CD4-positive, alpha-beta T cell (primary cell): ENCODE measurements at regions of chr9 and their contacts with region 1.

Region 1: DNA sequence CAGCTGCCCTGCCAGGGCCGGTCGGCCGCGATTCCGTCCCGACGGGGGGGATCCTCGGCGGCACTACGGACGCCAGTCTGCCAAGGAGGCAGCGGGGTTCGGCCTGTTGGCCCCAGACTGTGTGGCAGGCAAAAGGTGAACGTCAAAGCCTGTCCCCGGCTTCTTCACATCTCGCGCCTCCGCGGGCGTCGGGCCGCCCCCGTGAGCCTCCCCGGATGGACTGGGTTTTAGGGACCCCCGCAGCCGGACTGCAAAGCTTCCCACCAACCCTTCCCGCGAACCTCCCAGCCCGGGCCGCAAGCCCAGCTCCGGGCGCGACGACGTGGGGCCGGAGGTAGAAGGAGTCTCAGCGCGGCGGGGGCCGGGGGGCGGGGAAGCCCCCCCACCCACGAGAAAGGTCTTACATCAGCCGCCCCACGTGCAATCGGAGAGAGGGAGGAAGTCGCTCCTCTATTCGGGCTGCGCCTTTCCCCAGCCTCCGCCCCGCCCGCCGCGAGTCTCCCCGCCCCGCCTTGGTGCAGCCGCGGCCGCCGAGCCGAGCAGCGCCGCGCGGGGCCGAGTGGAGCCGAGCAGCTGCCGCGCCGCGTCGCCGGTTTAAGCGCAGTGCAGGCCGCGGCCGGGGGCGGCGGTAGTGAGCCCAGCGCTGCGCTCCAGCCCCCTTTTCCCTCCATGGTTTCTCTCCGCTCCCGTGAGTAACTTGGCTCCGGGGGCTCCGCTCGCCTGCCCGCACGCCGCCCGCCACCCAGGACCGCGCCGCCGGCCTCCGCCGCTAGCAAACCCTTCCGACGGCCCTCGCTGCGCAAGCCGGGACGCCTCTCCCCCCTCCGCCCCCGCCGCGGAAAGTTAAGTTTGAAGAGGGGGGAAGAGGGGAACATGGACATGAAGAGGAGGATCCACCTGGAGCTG is at the start of gene ANP32B:
- DNase-seq: peak; percentile 87 to 98 (median 94)
- ATAC-seq: peak; percentile 82
- H3K4me3 ChIP-seq: peak within 1 kb of the TSS; percentile 78
- H3K4me3 Mint-ChIP-seq: peak within 1 kb of the TSS; percentile 93
- H3K27ac ChIP-seq: peak within 1 kb of the TSS; percentile 78 to 88
- H3K27ac Mint-ChIP-seq: peak within 1 kb of the TSS; percentile 89
- H3K4me1 ChIP-seq: peaks cover 50% of the 10 kb centered on the region
- H3K4me1 Mint-ChIP-seq: peaks cover 73% of the 10 kb centered on the region
- H3K27me3 ChIP-seq: no peaks in the 10 kb centered on the region
- H3K27me3 Mint-ChIP-seq: no peaks in the 10 kb centered on the region
- CTCF ChIP-seq: peak; percentile 67
- total RNA-seq, gene ANP32B: 178 to 192 TPM

Region 2: DNA sequence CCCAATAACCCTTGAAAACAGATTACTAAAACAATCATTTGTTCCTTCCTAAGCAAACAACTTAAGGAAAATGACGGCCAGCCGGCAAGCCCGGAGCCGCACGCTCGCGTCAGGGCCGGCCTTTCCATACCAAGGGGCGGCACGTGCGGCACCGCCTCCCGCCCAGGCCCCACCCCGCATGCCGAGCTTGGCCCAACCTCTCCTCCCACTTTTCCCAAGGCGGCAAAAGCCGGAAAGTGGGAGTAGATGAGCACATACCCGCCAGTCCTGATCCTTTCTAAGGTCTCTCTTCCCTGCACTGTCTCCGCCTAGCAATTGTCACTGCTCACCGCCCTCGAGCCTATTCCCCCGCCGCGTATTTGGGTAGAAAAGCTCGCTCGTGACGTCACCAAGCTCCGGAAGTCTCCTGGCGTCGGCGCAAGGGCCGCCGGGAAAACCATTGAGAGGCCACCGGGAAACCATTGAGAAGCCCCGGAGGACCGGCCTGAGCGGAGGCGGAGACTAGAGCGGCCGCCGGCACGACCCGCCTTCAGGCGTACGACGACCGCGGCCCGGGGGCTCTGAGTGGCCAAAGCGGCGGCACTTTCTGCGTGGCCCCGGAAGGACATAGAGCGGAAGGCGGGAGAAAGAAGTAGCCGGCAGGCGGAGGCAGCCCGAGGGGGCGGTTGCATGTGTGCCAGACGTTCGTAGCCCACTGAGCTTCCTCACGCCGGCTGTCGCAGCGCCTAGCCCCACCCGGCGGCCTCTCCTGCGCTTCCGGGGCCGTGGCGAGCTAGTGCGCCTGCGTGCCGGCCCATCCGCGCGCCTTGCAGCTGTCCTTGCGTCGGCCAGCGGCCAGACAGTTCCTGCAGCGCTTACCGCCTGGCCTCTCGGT is 349.7 kb before region 1 on chr9 and contains the starts of genes NCBP1 and TSTD2:
- CTCF ChIA-PET with region 1: interaction called, 3 read pairs
- POLR2A ChIA-PET with region 1: interaction called, 14 read pairs
- intact Hi-C with region 1: loop called in 1 of 2 experiments (anchors 2 kb)
- DNase-seq: peak; percentile 92 to 99 (median 94)
- ATAC-seq: peak; percentile 82
- H3K4me3 ChIP-seq: peak within 1 kb of the TSS; percentile 72
- H3K4me3 Mint-ChIP-seq: peak within 1 kb of the TSS; percentile 97
- H3K27ac ChIP-seq: peak within 1 kb of the TSS; percentile 95 to 97
- H3K27ac Mint-ChIP-seq: peak within 1 kb of the TSS; percentile 99
- H3K4me1 ChIP-seq: peaks cover 37% of the 10 kb centered on the region
- H3K4me1 Mint-ChIP-seq: peaks cover 73% of the 10 kb centered on the region
- H3K27me3 ChIP-seq: no peaks in the 10 kb centered on the region
- H3K27me3 Mint-ChIP-seq: no peaks in the 10 kb centered on the region
- CTCF ChIP-seq: no peak
- total RNA-seq, gene NCBP1: 50.7 to 53.5 TPM
- total RNA-seq, gene TSTD2: 23.8 to 26.0 TPM

Region 3: DNA sequence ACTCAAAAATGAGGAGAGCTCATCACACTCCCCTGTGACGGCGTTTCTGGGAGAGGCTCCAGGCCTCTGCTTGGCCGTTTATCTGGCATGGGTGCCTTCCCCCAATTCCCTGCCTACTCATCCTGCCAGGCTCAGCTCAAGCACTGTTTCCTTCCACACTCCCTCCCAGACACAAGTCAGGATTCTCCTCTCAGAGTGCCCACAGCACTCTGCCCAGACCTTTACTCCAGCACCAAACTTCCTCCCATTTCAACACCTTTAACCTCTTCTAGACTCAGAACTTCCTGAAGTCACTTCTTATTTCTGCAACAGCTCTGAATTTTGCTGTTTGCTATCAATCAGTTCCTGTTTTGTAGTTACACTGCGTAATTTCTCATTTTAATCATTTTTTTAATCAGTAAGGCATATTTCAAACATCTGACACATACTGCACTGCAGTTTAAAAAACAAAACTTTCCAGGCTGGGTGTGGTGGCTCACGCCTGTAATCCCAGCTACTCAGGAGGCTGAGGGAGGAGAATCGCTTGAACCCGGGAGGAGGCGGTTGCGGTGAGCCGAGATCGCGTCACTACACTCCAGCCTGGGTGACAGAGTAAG is 76.6 kb before region 1 on chr9:
- CTCF ChIA-PET with region 1: interaction called, 13 read pairs
- POLR2A ChIA-PET with region 1: interaction called, 9 read pairs
- intact Hi-C with region 1: loop called in 1 of 2 experiments (anchors 5 kb)
- DNase-seq: peak in 11 of 14 experiments; percentile 17 to 81 (median 58)
- ATAC-seq: peak; percentile 51
- H3K4me3 ChIP-seq: peak overlapping the region; percentile 44
- H3K4me3 Mint-ChIP-seq: peak overlapping the region; percentile 82
- H3K27ac ChIP-seq: peak overlapping the region; percentile 81 to 86
- H3K27ac Mint-ChIP-seq: peak overlapping the region; percentile 96
- H3K4me1 ChIP-seq: peaks cover 92% of the 10 kb centered on the region
- H3K4me1 Mint-ChIP-seq: peaks cover 94% of the 10 kb centered on the region
- H3K27me3 ChIP-seq: no peaks in the 10 kb centered on the region
- H3K27me3 Mint-ChIP-seq: no peaks in the 10 kb centered on the region
- CTCF ChIP-seq: no peak

Region 4: GRCh38 chr9:97938081-97938644 is 44.8 kb before region 1 on chr9 and contains the start of gene HEMGN:
- CTCF ChIA-PET with region 1: no interaction called
- POLR2A ChIA-PET with region 1: interaction called, 11 read pairs
- intact Hi-C with region 1: no loop called
- DNase-seq: peak in 9 of 14 experiments; percentile 16 to 87 (median 38)
- ATAC-seq: peak; percentile 98
- H3K4me3 ChIP-seq: no peak within 1 kb of the TSS
- H3K4me3 Mint-ChIP-seq: peak within 1 kb of the TSS; percentile 44
- H3K27ac ChIP-seq: peak within 1 kb of the TSS; percentile 18 to 57
- H3K27ac Mint-ChIP-seq: peak within 1 kb of the TSS; percentile 79
- H3K4me1 ChIP-seq: peaks cover 27% of the 10 kb centered on the region
- H3K4me1 Mint-ChIP-seq: peaks cover 57% of the 10 kb centered on the region
- H3K27me3 ChIP-seq: no peaks in the 10 kb centered on the region
- H3K27me3 Mint-ChIP-seq: no peaks in the 10 kb centered on the region
- CTCF ChIP-seq: no peak
- total RNA-seq, gene HEMGN: 0.30 to 0.34 TPM

Region 5: DNA sequence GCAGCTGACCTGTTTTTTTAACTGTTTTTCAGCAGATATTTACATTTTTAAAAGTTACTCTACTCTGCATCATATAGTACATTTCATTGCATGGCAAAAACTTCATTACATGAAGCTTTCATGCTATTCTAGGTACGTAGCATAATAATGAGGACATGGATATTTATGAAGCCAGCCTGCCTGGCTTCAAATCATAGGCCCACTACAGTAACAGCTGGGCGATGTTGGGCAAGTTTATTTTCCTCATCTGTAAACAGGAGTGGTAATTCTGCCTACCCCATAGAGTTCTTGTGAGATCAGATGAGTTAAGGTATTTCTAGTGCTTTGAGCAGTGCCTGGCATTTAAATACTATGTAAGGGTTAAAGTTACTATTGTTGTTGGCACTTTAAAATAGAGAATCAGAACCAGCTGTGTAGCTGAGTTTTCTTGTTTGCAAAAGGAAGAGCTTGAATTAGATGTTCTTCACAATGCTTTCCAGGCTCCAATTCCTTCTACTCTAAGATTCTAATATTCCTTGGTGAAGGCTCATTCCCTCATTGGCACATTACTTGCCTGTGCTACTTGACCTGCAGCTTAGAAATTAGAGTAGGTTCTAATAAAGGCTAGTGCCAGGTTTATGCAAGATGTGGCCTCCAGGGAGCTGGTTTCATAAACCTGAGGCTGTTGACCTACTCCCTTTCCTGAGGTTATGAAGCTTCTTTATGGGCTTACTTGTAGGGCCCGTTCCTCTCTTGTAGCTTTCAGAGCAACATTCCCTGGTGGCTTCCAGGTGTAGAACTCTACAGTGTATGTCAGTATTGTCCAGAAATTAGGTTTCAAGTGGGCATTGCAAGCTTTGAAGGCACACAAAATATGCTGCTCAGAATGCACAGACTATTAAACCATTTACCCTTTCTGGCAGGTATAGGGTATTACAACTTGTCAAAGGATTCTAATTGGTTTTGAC is 14.7 kb after region 1 on chr9:
- CTCF ChIA-PET with region 1: interaction called, 15 read pairs
- POLR2A ChIA-PET with region 1: interaction called, 12 read pairs
- intact Hi-C with region 1: no loop called
- DNase-seq: no peak
- ATAC-seq: no peak
- H3K4me3 ChIP-seq: no peak overlapping the region
- H3K4me3 Mint-ChIP-seq: no peak overlapping the region
- H3K27ac ChIP-seq: no peak overlapping the region
- H3K27ac Mint-ChIP-seq: peak overlapping the region; percentile 70
- H3K4me1 ChIP-seq: peaks cover 17% of the 10 kb centered on the region
- H3K4me1 Mint-ChIP-seq: peaks cover 70% of the 10 kb centered on the region
- H3K27me3 ChIP-seq: no peaks in the 10 kb centered on the region
- H3K27me3 Mint-ChIP-seq: no peaks in the 10 kb centered on the region
- CTCF ChIP-seq: no peak

Region 6: DNA sequence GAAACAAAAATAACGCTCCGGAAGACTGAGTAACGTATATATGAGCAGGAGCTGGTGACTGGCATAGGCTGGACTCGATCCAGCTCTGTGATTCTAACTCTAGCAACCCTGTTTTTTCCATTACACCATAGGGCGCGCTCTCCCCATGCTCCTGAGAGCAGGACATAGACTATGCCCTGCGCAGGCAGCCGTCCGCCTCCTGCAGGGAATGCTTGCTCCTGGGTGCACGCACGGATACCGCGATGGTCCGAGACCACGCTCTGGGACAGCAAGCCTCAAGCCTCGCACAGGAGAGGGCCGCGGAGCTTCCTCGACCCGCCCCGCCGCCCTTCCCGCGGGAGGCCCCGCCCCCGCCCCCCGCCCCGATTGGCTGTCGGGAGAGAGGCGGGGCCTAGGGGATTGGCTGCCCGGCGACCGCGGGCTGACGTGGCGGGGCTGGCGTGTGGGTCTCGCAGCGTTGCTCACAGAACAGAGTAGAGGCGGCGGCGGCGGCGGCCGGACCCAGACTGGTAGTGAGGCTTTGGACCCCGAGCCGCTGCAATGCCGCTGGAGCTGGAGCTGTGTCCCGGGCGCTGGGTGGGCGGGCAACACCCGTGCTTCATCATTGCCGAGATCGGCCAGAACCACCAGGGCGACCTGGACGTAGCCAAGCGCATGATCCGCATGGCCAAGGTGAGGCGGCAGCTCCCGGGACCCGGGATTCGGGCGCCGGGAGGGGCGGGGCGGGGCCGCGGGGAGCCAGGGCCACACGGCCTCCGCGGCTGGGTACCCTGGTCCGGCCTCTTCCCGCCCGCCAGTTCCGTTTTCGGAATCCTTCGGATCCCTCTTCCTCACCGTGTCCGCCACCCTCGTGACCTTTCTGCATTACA is 73.6 kb after region 1 on chr9 and contains the start of gene NANS:
- CTCF ChIA-PET with region 1: interaction called, 5 read pairs
- POLR2A ChIA-PET with region 1: interaction called, 28 read pairs
- intact Hi-C with region 1: loop called in 1 of 2 experiments (anchors 2 kb)
- DNase-seq: peak; percentile 81 to 95 (median 88)
- ATAC-seq: peak; percentile 92
- H3K4me3 ChIP-seq: peak within 1 kb of the TSS; percentile 71
- H3K4me3 Mint-ChIP-seq: peak within 1 kb of the TSS; percentile 98
- H3K27ac ChIP-seq: peak within 1 kb of the TSS; percentile 64 to 75
- H3K27ac Mint-ChIP-seq: peak within 1 kb of the TSS; percentile 93
- H3K4me1 ChIP-seq: peaks cover 27% of the 10 kb centered on the region
- H3K4me1 Mint-ChIP-seq: peaks cover 28% of the 10 kb centered on the region
- H3K27me3 ChIP-seq: no peaks in the 10 kb centered on the region
- H3K27me3 Mint-ChIP-seq: no peaks in the 10 kb centered on the region
- CTCF ChIP-seq: no peak
- total RNA-seq, gene NANS: 70.5 to 74.0 TPM

Region 7: GRCh38 chr9:98118640-98119601 is 136.0 kb after region 1 on chr9 and contains the start of gene TRIM14:
- CTCF ChIA-PET with region 1: interaction called, 3 read pairs
- POLR2A ChIA-PET with region 1: interaction called, 13 read pairs
- intact Hi-C with region 1: no loop called
- DNase-seq: peak in 12 of 14 experiments; percentile 28 to 74 (median 46)
- ATAC-seq: peak; percentile 38
- H3K4me3 ChIP-seq: peak within 1 kb of the TSS; percentile 89
- H3K4me3 Mint-ChIP-seq: peak within 1 kb of the TSS; percentile 90
- H3K27ac ChIP-seq: peak within 1 kb of the TSS; percentile 79 to 84
- H3K27ac Mint-ChIP-seq: peak within 1 kb of the TSS; percentile 95
- H3K4me1 ChIP-seq: peaks cover 66% of the 10 kb centered on the region
- H3K4me1 Mint-ChIP-seq: peaks cover 65% of the 10 kb centered on the region
- H3K27me3 ChIP-seq: no peaks in the 10 kb centered on the region
- H3K27me3 Mint-ChIP-seq: no peaks in the 10 kb centered on the region
- CTCF ChIP-seq: no peak
- total RNA-seq, gene TRIM14: 23.5 to 23.6 TPM